Left ventricle myocardium inferior (tissue), 1 donor: ENCODE measurements at regions of chr1 and their contacts with region 1.

Region 1: GRCh38 chr1:85259118-85259911 is at the start of gene C1orf52:
- DNase-seq: peak; percentile 96
- H3K4me3 ChIP-seq: peak within 1 kb of the TSS; percentile 96
- H3K27ac ChIP-seq: peak within 1 kb of the TSS; percentile 94
- H3K4me1 ChIP-seq: peaks cover 50% of the 10 kb centered on the region
- H3K27me3 ChIP-seq: no peaks in the 10 kb centered on the region
- CTCF ChIP-seq: peak; percentile 100
- total RNA-seq, gene C1orf52: 18.5 TPM

Region 2: DNA sequence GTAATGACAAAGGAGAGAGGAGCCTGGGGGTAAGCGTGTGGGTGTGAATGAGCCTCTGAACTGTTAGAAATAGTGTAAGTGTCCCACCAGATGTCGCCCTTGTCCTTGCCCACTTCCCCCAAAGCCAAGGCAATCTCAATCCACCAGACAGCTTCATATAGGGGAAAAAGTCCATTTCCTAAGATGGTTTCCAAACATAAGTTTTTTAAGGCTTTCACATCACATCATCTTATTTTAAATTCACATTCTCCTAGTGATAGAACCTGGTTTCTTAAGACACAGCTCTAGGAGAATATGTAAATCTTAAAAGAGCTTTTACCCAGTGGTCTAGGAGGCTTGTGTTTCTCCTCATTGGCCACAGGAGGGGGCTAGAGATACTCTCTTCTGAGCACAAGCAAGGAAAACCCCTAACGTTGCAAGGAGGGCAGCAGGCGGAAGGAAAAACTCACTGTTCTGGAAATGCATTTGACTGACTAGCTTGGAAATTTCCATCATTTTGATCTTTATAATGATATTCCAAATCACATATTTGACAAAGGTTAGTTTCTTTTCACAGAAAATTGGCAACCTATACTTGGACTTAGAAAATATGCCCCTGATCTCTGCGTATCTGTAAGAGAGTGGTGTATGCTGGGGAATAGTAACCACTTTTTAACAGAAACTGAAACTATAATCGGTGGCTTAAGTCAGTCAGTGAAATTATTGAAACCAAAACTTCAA is 314.4 kb before region 1 on chr1:
- intact Hi-C with region 1: loop called (anchors 2 kb)
- DNase-seq: peak; percentile 22
- H3K4me3 ChIP-seq: peak overlapping the region; percentile 57
- H3K27ac ChIP-seq: peak overlapping the region; percentile 68
- H3K4me1 ChIP-seq: peaks cover 7% of the 10 kb centered on the region
- H3K27me3 ChIP-seq: no peaks in the 10 kb centered on the region
- CTCF ChIP-seq: peak; percentile 95

Region 3: DNA sequence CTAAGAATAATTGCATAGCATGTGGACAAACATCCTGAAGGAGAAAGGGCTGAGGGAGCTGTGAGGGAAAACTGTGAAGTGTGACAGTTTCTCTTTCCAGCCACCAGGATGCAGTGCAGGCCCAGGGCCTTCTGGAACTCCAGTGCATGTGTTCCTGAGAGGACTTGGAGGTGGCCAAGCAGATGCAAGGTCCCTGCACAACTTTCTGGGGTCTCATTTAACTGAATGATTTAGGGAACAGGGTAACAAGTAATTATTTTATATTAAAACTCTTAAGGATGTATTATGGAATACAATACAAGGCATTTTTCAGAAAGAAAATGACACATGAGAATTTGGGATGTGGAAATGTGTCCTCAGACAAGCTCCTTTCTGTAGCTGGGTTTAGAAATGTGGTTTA is 149.8 kb before region 1 on chr1:
- intact Hi-C with region 1: loop called (anchors 5 kb)
- DNase-seq: peak; percentile 26
- H3K4me3 ChIP-seq: no peak overlapping the region
- H3K27ac ChIP-seq: no peak overlapping the region
- H3K4me1 ChIP-seq: no peaks in the 10 kb centered on the region
- H3K27me3 ChIP-seq: no peaks in the 10 kb centered on the region
- CTCF ChIP-seq: peak; percentile 83